ENCODE measurements at regions of chr7 and their contacts with region 1.

Region 1: GRCh38 chr7:992709-993607 is 10.0 kb downstream of the CYP2W1 start:
- DNase-seq: peak; percentile 88
- ATAC-seq: peak; percentile 96
- H3K4me3 Mint-ChIP-seq: no peak overlapping the region
- H3K27ac Mint-ChIP-seq: no peak overlapping the region
- H3K4me1 Mint-ChIP-seq: peaks cover 11% of the 10 kb centered on the region
- H3K27me3 Mint-ChIP-seq: no peaks in the 10 kb centered on the region
- CTCF ChIP-seq: peak; percentile 89

Region 2: GRCh38 chr7:867672-868486 is 125.1 kb before region 1 on chr7:
- CTCF ChIA-PET with region 1: no interaction called
- POLR2A ChIA-PET with region 1: no interaction called
- intact Hi-C with region 1: no loop called
- DNase-seq: no peak
- ATAC-seq: no peak
- H3K4me3 Mint-ChIP-seq: no peak overlapping the region
- H3K27ac Mint-ChIP-seq: no peak overlapping the region
- H3K4me1 Mint-ChIP-seq: peaks cover 2% of the 10 kb centered on the region
- H3K27me3 Mint-ChIP-seq: no peaks in the 10 kb centered on the region
- CTCF ChIP-seq: no peak

Region 3: GRCh38 chr7:1004018-1004852 is 11.3 kb after region 1 on chr7:
- CTCF ChIA-PET with region 1: interaction called, 18 read pairs
- POLR2A ChIA-PET with region 1: interaction called, 6 read pairs
- intact Hi-C with region 1: no loop called
- DNase-seq: peak; percentile 70
- ATAC-seq: peak; percentile 81
- H3K4me3 Mint-ChIP-seq: peak overlapping the region; percentile 64
- H3K27ac Mint-ChIP-seq: peak overlapping the region; percentile 70
- H3K4me1 Mint-ChIP-seq: peaks cover 38% of the 10 kb centered on the region
- H3K27me3 Mint-ChIP-seq: no peaks in the 10 kb centered on the region
- CTCF ChIP-seq: no peak

Region 4: GRCh38 chr7:1044191-1045068 is 51.5 kb after region 1 on chr7 and contains the start of gene GPR146:
- CTCF ChIA-PET with region 1: interaction called, 13 read pairs
- POLR2A ChIA-PET with region 1: interaction called, 3 read pairs
- intact Hi-C with region 1: no loop called
- DNase-seq: peak; percentile 96
- ATAC-seq: peak; percentile 97
- H3K4me3 Mint-ChIP-seq: peak within 1 kb of the TSS; percentile 85
- H3K27ac Mint-ChIP-seq: peak within 1 kb of the TSS; percentile 50
- H3K4me1 Mint-ChIP-seq: peaks cover 24% of the 10 kb centered on the region
- H3K27me3 Mint-ChIP-seq: peaks cover 4% of the 10 kb centered on the region
- CTCF ChIP-seq: no peak
- total RNA-seq, gene GPR146: 6.2 and 6.9 TPM in 2 replicates

Region 5: GRCh38 chr7:1073142-1073977 is 80.4 kb after region 1 on chr7:
- CTCF ChIA-PET with region 1: interaction called, 20 read pairs
- POLR2A ChIA-PET with region 1: interaction called, 4 read pairs
- intact Hi-C with region 1: no loop called
- DNase-seq: no peak
- ATAC-seq: no peak
- H3K4me3 Mint-ChIP-seq: no peak overlapping the region
- H3K27ac Mint-ChIP-seq: no peak overlapping the region
- H3K4me1 Mint-ChIP-seq: peaks cover 5% of the 10 kb centered on the region
- H3K27me3 Mint-ChIP-seq: no peaks in the 10 kb centered on the region
- CTCF ChIP-seq: no peak

Region 6: GRCh38 chr7:1144269-1144771 is 151.4 kb after region 1 on chr7:
- CTCF ChIA-PET with region 1: interaction called, 59 read pairs
- POLR2A ChIA-PET with region 1: interaction called, 4 read pairs
- intact Hi-C with region 1: loop called (anchors 5 kb)
- DNase-seq: no peak
- ATAC-seq: peak; percentile 43
- H3K4me3 Mint-ChIP-seq: peak overlapping the region; percentile 24
- H3K27ac Mint-ChIP-seq: peak overlapping the region; percentile 35
- H3K4me1 Mint-ChIP-seq: peaks cover 41% of the 10 kb centered on the region
- H3K27me3 Mint-ChIP-seq: no peaks in the 10 kb centered on the region
- CTCF ChIP-seq: no peak

Region 7: DNA sequence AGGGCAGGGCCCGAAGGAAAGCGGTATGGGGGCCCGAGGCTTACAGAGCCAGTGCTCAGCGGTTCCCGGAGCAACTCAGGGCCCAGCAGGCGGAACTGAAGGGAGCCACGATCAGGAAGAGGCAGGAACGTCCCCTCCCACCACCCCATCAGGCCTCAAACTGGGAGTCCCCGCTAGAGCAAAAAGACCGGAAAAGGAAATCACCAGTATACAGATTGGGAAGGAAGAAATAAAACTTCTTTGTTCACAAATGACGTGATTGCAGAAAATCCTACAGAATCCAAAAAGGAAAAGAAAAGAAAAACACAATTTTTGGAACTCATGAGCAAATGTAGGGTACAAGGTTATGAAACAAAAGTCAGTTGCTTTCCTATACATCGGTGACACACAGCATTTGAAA is 188.7 kb after region 1 on chr7:
- CTCF ChIA-PET with region 1: interaction called, 59 read pairs
- POLR2A ChIA-PET with region 1: interaction called, 3 read pairs
- intact Hi-C with region 1: loop called (anchors 1 kb)
- DNase-seq: no peak
- ATAC-seq: no peak
- H3K4me3 Mint-ChIP-seq: no peak overlapping the region
- H3K27ac Mint-ChIP-seq: no peak overlapping the region
- H3K4me1 Mint-ChIP-seq: peaks cover 9% of the 10 kb centered on the region
- H3K27me3 Mint-ChIP-seq: peaks cover 40% of the 10 kb centered on the region
- CTCF ChIP-seq: no peak

Measured in activated B cell treated with CpG ODN at 0.5 μM for 24 hours (primary cell).